ENCODE measurements at regions of chr1 and their contacts with region 1.

Region 1: GRCh38 chr1:43073490-43074230 is 98.4 kb downstream of the EBNA1BP2 start:
- DNase-seq: peak; percentile 59 to 84
- H3K4me3 ChIP-seq: no peak overlapping the region
- H3K27ac ChIP-seq: no peak overlapping the region
- H3K4me1 ChIP-seq: peaks cover 0 to 18% (median 13%) of the 10 kb centered on the region in 4 experiments; a peak in 6 of 7 replicates
- H3K27me3 ChIP-seq: no peaks in the 10 kb centered on the region
- CTCF ChIP-seq: peak; percentile 71 to 92 (median 86)
- EP300 ChIP-seq: no peak
- POLR2A ChIP-seq: no peak
- RAD21 ChIP-seq: peak; percentile 100

Region 2: DNA sequence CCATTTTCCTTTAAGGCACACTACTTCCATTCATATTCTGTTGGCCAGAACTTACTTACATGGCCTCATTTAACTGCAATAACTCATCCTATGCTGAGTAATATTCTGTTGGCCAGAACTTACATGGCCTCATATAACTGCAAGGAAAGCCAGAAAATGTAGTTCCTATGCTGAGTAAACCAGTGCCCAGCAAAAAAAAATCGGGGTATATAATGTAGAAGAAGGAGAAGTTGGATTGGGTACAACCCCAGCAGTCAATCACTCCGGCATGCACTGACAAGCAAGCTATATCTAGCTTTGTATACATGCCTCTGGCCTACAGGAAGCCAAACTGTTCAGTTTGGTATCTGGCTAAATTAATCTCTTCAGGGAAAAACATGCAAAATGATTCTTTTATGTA is 454.8 kb before region 1 on chr1:
- CTCF ChIA-PET with region 1: no interaction called
- POLR2A ChIA-PET with region 1: no interaction called
- DNase-seq: no peak
- H3K4me3 ChIP-seq: no peak overlapping the region
- H3K27ac ChIP-seq: no peak overlapping the region
- H3K4me1 ChIP-seq: no peaks in the 10 kb centered on the region
- H3K27me3 ChIP-seq: no peaks in the 10 kb centered on the region
- CTCF ChIP-seq: no peak
- EP300 ChIP-seq: no peak
- POLR2A ChIP-seq: no peak
- RAD21 ChIP-seq: no peak

Region 3: GRCh38 chr1:42777852-42778251 is 295.8 kb before region 1 on chr1:
- CTCF ChIA-PET with region 1: interaction called, 83 read pairs
- POLR2A ChIA-PET with region 1: interaction called, 4 read pairs
- DNase-seq: peak in 1 of 2 experiments; percentile 68
- H3K4me3 ChIP-seq: no peak overlapping the region
- H3K27ac ChIP-seq: no peak overlapping the region
- H3K4me1 ChIP-seq: no peaks in the 10 kb centered on the region
- H3K27me3 ChIP-seq: no peaks in the 10 kb centered on the region
- CTCF ChIP-seq: peak; percentile 53 to 92 (median 76)
- EP300 ChIP-seq: no peak
- POLR2A ChIP-seq: no peak
- RAD21 ChIP-seq: peak; percentile 92 to 94

Region 4: GRCh38 chr1:42904434-42904833 is 169.2 kb before region 1 on chr1:
- CTCF ChIA-PET with region 1: interaction called, 11 read pairs
- POLR2A ChIA-PET with region 1: no interaction called
- DNase-seq: peak in 1 of 2 experiments; percentile 19
- H3K4me3 ChIP-seq: no peak overlapping the region
- H3K27ac ChIP-seq: no peak overlapping the region
- H3K4me1 ChIP-seq: peaks cover 0 to 3% (median 0%) of the 10 kb centered on the region in 4 experiments; a peak in 2 of 7 replicates
- H3K27me3 ChIP-seq: peaks cover 0 to 1% (median 0%) of the 10 kb centered on the region in 4 experiments; a peak in 1 of 7 replicates
- CTCF ChIP-seq: no peak
- EP300 ChIP-seq: no peak
- POLR2A ChIP-seq: no peak
- RAD21 ChIP-seq: no peak

Region 5: GRCh38 chr1:42931108-42931539 is 142.5 kb before region 1 on chr1:
- CTCF ChIA-PET with region 1: interaction called, 136 read pairs
- POLR2A ChIA-PET with region 1: interaction called, 4 read pairs
- DNase-seq: no peak
- H3K4me3 ChIP-seq: no peak overlapping the region
- H3K27ac ChIP-seq: no peak overlapping the region
- H3K4me1 ChIP-seq: peaks cover 0 to 19% (median 12%) of the 10 kb centered on the region in 4 experiments; a peak in 5 of 7 replicates
- H3K27me3 ChIP-seq: no peaks in the 10 kb centered on the region
- CTCF ChIP-seq: peak in 2 of 3 experiments; percentile 75 to 84; a peak in 3 of 4 replicates
- EP300 ChIP-seq: no peak
- POLR2A ChIP-seq: no peak
- RAD21 ChIP-seq: peak; percentile 78 to 81

Region 6: DNA sequence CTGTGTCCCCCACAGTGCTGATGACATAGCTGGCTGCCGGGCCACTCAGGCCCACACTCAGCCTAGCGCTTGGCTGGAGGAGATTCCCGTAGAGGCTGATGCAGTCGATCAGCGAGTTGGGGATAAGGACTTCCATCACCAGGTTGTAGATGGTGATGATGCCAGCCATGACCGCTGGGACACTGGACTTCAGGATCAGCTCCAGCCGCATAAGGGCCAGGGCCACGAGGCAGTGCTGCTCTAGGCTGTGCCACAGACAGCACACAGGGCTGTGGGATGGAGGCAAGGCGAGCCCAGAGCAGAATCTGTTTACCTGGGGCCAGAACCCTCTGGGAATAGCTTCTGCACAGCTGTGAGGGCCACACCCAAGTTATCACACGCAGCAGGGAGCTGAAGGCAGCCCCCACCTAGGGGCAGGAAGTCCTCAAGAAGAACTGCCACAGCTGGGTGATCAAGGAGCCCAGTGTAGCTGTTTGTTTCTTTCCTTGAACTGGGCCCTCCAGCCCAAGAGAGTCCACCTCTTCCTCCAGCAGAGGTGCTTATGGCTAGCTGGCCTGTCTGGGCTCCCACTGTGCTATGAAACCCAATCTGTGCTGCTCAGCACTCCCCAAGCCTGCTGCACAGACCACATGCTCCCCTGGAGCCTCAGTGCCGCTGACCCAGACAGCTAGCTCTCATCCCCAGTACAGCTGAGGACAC is 121.2 kb before region 1 on chr1:
- CTCF ChIA-PET with region 1: interaction called, 29 read pairs
- POLR2A ChIA-PET with region 1: interaction called, 5 read pairs
- DNase-seq: no peak
- H3K4me3 ChIP-seq: no peak overlapping the region; a peak in 1 of 8 replicates
- H3K27ac ChIP-seq: peak overlapping the region; percentile 43
- H3K4me1 ChIP-seq: peaks cover 22 to 59% (median 45%) of the 10 kb centered on the region in 4 experiments
- H3K27me3 ChIP-seq: no peaks in the 10 kb centered on the region
- CTCF ChIP-seq: no peak
- EP300 ChIP-seq: no peak
- POLR2A ChIP-seq: peak in 1 of 2 experiments; percentile 37; a peak in 2 of 3 replicates
- RAD21 ChIP-seq: no peak

Region 7: DNA sequence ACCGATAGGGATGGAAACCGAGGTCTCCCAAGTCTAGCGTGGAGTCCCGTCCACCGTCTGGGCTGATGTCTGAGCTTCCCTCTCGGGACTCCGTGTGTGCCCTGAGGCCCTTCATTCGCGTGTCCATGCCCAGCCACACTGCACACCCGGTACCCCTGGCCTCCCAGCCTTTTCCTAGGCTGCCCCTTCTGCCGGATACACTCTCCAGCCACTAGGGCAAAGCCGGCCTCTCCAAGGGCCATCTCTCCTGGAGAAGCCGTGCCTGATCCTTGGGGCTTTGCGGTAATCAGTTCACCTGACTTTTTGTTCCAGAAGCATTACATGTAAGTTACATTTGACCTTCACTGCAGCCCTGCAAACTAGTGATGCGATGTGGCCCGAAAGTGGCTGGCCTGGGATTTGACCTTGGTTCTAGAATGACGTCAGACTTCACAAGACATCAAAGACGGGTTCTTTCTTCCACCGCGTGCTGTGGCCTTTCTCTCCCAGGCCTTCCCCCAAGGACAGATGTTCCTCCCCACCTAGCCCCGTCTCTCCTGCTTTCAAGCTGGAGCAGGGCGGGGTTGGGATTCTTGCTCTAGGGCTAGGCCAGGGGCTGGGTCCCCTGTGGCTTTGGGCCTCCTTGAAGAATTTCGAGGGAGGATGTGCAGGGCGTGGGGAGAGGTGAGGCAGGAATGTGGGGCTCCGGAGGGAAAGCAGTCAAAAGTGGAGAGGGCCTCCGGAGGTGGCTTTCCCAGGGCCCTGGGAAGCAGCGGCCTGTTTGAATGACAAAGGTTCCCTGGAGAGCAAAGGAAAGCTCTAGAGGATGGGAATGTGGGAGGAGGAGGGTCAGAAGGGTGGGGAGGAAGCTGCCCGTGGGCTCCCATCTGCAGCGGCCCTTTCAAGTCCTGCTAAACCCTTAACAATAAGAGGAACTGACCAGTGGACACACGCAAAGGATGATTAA is 65.3 kb before region 1 on chr1:
- CTCF ChIA-PET with region 1: interaction called, 7 read pairs
- POLR2A ChIA-PET with region 1: interaction called, 11 read pairs
- DNase-seq: peak; percentile 87 to 99
- H3K4me3 ChIP-seq: peak overlapping the region in 3 of 4 experiments; percentile 4 to 45 (median 7); a peak in 5 of 8 replicates
- H3K27ac ChIP-seq: peak overlapping the region; percentile 96
- H3K4me1 ChIP-seq: peaks cover 21 to 41% (median 28%) of the 10 kb centered on the region in 4 experiments
- H3K27me3 ChIP-seq: no peaks in the 10 kb centered on the region
- CTCF ChIP-seq: peak; percentile 6 to 36 (median 6); a peak in 3 of 4 replicates
- EP300 ChIP-seq: peak in 1 of 2 experiments; percentile 95; a peak in 2 of 3 replicates
- POLR2A ChIP-seq: no peak; a peak in 2 of 3 replicates
- RAD21 ChIP-seq: peak; percentile 23 to 29